Uterus (tissue), 4 donors: ENCODE measurements at regions of chr18 and their contacts with region 1.

Region 1: GRCh38 chr18:23515911-23516546 is 12.7 kb downstream of the RMC1 start:
- DNase-seq: peak; percentile 63 to 76
- H3K4me3 ChIP-seq: no peak overlapping the region
- H3K27ac ChIP-seq: no peak overlapping the region
- H3K4me1 ChIP-seq: no peaks in the 10 kb centered on the region
- H3K27me3 ChIP-seq: no peaks in the 10 kb centered on the region
- CTCF ChIP-seq: peak; percentile 75 to 82 (median 78)
- POLR2A ChIP-seq: no peak

Region 2: GRCh38 chr18:23580677-23581367 is 64.8 kb after region 1 on chr18:
- intact Hi-C with region 1: loop called (anchors 5 kb)
- DNase-seq: no peak
- H3K4me3 ChIP-seq: no peak overlapping the region
- H3K27ac ChIP-seq: no peak overlapping the region
- H3K4me1 ChIP-seq: peaks cover 0 to 6% of the 10 kb centered on the region in 2 donors
- H3K27me3 ChIP-seq: no peaks in the 10 kb centered on the region
- CTCF ChIP-seq: no peak
- POLR2A ChIP-seq: no peak